Endothelial cell of umbilical vein (primary cell): ENCODE measurements at regions of chr1 and their contacts with region 1.

Region 1: GRCh38 chr1:198892065-198892464 is 253.2 kb downstream of the PTPRC start:
- DNase-seq: peak; percentile 87
- H3K4me3 ChIP-seq: no peak overlapping the region
- H3K27ac ChIP-seq: peak overlapping the region; percentile 74
- H3K4me1 ChIP-seq: peaks cover 44% of the 10 kb centered on the region
- H3K27me3 ChIP-seq: no peaks in the 10 kb centered on the region
- CTCF ChIP-seq: no peak
- POLR2A ChIP-seq: no peak

Region 2: DNA sequence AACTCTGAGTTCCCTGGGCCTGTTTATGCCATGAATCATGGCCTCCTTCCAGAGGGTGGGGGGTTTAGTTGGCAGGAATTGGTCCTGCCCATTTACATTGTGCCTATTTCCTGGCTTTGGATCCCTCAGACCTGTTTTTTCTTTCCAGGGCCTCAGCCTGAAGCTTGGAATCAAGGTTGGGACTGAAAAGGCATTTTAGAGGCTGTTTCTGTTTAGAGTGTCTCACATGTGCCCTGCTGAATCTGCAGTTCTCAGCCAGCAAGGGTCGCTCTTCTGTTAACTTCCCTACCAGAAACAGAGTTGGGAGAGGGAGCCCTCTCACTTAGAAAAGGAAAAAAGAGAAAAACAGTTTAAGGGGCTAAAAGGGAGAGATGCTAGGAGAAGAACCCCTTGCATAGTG is 62.1 kb before region 1 on chr1:
- CTCF ChIA-PET with region 1: no interaction called
- POLR2A ChIA-PET with region 1: no interaction called
- dilution Hi-C with region 1: no loop called
- intact Hi-C with region 1: no loop called
- DNase-seq: peak; percentile 66
- H3K4me3 ChIP-seq: no peak overlapping the region
- H3K27ac ChIP-seq: no peak overlapping the region
- H3K4me1 ChIP-seq: peaks cover 13% of the 10 kb centered on the region
- H3K27me3 ChIP-seq: no peaks in the 10 kb centered on the region
- CTCF ChIP-seq: peak in 1 of 2 donors; percentile 25
- POLR2A ChIP-seq: no peak

Region 3: GRCh38 chr1:198880818-198881597 is 11.1 kb before region 1 on chr1:
- CTCF ChIA-PET with region 1: interaction called, 4 read pairs
- POLR2A ChIA-PET with region 1: interaction called, 5 read pairs
- dilution Hi-C with region 1: no loop called
- intact Hi-C with region 1: loop called (anchors 1 kb)
- DNase-seq: peak; percentile 87
- H3K4me3 ChIP-seq: no peak overlapping the region
- H3K27ac ChIP-seq: peak overlapping the region; percentile 58
- H3K4me1 ChIP-seq: peaks cover 15% of the 10 kb centered on the region
- H3K27me3 ChIP-seq: no peaks in the 10 kb centered on the region
- CTCF ChIP-seq: no peak
- POLR2A ChIP-seq: no peak

Region 4: DNA sequence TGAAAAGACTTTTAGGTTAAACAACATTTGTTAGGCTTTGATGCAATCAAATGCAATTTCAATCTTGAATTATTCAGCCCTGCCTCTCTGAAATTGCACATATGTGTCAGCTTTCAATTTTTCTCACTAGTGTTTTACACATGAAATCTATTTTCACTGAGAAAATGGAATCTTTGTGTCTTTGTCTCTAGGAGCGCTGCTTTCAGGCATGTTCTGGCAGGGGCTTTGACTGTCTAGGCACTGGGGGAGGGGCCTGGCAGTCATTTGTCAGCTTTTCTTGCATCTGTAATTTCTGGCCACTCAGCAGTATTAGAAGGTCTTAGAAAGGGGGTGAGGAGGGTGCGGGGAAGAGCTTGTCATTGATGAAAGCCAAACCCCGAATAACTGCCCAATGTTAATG is 11.1 kb after region 1 on chr1:
- CTCF ChIA-PET with region 1: interaction called, 24 read pairs
- POLR2A ChIA-PET with region 1: no interaction called
- dilution Hi-C with region 1: no loop called
- intact Hi-C with region 1: no loop called
- DNase-seq: no peak
- H3K4me3 ChIP-seq: no peak overlapping the region
- H3K27ac ChIP-seq: no peak overlapping the region
- H3K4me1 ChIP-seq: peaks cover 17% of the 10 kb centered on the region
- H3K27me3 ChIP-seq: no peaks in the 10 kb centered on the region
- CTCF ChIP-seq: no peak
- POLR2A ChIP-seq: no peak

Region 5: DNA sequence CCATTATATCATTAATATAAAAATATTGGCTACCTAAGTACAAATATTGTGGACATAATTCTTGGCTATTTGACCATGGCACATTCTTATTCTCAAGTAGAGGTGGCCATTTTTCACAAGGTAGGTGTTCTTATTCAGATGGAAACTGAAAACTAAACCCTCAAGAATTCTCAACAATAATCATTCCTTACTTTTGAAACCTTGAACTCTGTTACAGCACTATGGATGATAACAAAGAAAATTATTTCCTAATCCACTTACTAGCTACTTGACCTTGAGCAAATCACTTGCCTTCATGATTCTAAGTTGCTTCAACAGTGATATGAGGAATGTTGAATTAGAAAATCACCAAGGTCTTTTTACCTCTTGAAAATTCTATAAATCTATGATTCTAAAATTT is 229.0 kb after region 1 on chr1:
- CTCF ChIA-PET with region 1: no interaction called
- POLR2A ChIA-PET with region 1: no interaction called
- dilution Hi-C with region 1: no loop called
- intact Hi-C with region 1: no loop called
- DNase-seq: no peak
- H3K4me3 ChIP-seq: no peak overlapping the region
- H3K27ac ChIP-seq: no peak overlapping the region
- H3K4me1 ChIP-seq: no peaks in the 10 kb centered on the region
- H3K27me3 ChIP-seq: no peaks in the 10 kb centered on the region
- CTCF ChIP-seq: no peak
- POLR2A ChIP-seq: no peak